Activated CD8-positive, alpha-beta memory T cell treated with anti-CD3 and anti-CD28 coated beads, Interleukin-2, amount 10 ng/mL, durations not matched to agents 7 days and 5 days (primary cell): ENCODE measurements at regions of chr19 and their contacts with region 1.

Region 1: GRCh38 chr19:12564016-12564664 is 12.9 kb upstream of the ZNF564 start:
- DNase-seq: peak; percentile 94
- ATAC-seq: peak; percentile 95
- H3K4me3 Mint-ChIP-seq: no peak overlapping the region
- H3K27ac Mint-ChIP-seq: no peak overlapping the region
- H3K4me1 Mint-ChIP-seq: peaks cover 5% of the 10 kb centered on the region
- H3K27me3 Mint-ChIP-seq: no peaks in the 10 kb centered on the region

Region 2: GRCh38 chr19:12425236-12425887 is 138.8 kb before region 1 on chr19:
- CTCF ChIA-PET with region 1: no interaction called
- DNase-seq: no peak
- ATAC-seq: no peak
- H3K4me3 Mint-ChIP-seq: no peak overlapping the region
- H3K27ac Mint-ChIP-seq: no peak overlapping the region
- H3K4me1 Mint-ChIP-seq: no peaks in the 10 kb centered on the region
- H3K27me3 Mint-ChIP-seq: no peaks in the 10 kb centered on the region

Region 3: GRCh38 chr19:12672744-12673143 is 108.6 kb after region 1 on chr19:
- CTCF ChIA-PET with region 1: interaction called, 57 read pairs
- DNase-seq: no peak
- ATAC-seq: no peak
- H3K4me3 Mint-ChIP-seq: no peak overlapping the region
- H3K27ac Mint-ChIP-seq: no peak overlapping the region
- H3K4me1 Mint-ChIP-seq: peaks cover 40% of the 10 kb centered on the region
- H3K27me3 Mint-ChIP-seq: no peaks in the 10 kb centered on the region

Region 4: DNA sequence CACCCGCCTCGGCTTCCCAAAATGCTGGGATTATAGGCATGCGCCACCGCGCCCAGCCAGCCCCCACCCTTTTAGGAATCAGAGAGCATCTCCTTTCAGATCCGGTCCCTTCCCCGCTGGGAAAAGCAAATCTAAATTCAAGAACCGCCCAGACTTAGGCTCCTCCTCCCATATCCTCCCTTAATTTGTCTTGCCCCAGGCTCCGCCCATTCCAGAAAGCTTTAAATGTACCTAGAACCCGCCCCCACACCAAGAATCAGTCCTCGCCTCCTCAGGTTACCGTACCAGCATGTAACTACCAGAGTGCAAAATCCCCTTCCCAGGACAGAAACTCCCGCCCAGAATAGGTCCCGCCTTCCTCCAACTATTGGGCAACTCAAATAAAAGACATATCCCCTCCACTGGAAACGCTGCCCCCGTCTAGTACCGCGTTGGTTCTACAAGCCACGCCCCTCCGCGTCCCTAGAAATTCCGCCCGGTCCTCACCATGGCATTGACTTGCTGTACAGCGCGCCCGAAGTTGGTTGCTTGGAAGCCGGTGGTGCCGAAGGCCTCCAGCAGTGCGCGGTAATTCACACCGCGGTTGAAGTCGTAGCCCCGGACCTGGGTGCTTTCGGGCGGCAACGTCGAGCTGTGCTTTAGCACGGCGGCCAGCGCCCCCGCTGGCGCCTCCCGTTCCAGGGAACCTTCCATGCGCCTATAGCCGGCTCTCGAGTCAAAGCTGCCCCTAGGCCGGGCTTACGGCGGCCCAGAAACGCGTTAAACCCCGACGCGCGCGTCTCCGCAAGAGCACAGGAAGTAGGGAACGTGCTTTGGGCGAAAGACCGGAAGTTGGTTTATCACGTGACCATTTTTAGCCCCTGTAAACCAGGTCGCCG is 117.2 kb after region 1 on chr19 and contains the start of gene DHPS:
- CTCF ChIA-PET with region 1: interaction called, 57 read pairs
- DNase-seq: peak; percentile 96
- ATAC-seq: peak; percentile 78
- H3K4me3 Mint-ChIP-seq: peak within 1 kb of the TSS; percentile 93
- H3K27ac Mint-ChIP-seq: peak within 1 kb of the TSS; percentile 94
- H3K4me1 Mint-ChIP-seq: peaks cover 26% of the 10 kb centered on the region
- H3K27me3 Mint-ChIP-seq: no peaks in the 10 kb centered on the region
- total RNA-seq, gene DHPS: 106 to 111 TPM